ENCODE measurements at regions of chr6 and their contacts with region 1.

Region 1: GRCh38 chr6:38509713-38510112 is 130.0 kb downstream of the BTBD9 start:
- DNase-seq: no peak
- H3K4me3 ChIP-seq: no peak overlapping the region
- H3K27ac ChIP-seq: no peak overlapping the region
- H3K4me1 ChIP-seq: no peaks in the 10 kb centered on the region
- H3K27me3 ChIP-seq: no peaks in the 10 kb centered on the region
- CTCF ChIP-seq: no peak

Region 2: GRCh38 chr6:38452816-38453660 is 56.7 kb before region 1 on chr6:
- intact Hi-C with region 1: no loop called
- DNase-seq: no peak
- H3K4me3 ChIP-seq: no peak overlapping the region
- H3K27ac ChIP-seq: no peak overlapping the region
- H3K4me1 ChIP-seq: no peaks in the 10 kb centered on the region
- H3K27me3 ChIP-seq: no peaks in the 10 kb centered on the region
- CTCF ChIP-seq: no peak

Region 3: GRCh38 chr6:38671885-38672467 is 162.3 kb after region 1 on chr6:
- intact Hi-C with region 1: loop called (anchors 10 kb)
- DNase-seq: peak; percentile 28
- H3K4me3 ChIP-seq: no peak overlapping the region
- H3K27ac ChIP-seq: no peak overlapping the region
- H3K4me1 ChIP-seq: no peaks in the 10 kb centered on the region
- H3K27me3 ChIP-seq: no peaks in the 10 kb centered on the region
- CTCF ChIP-seq: peak; percentile 55

Measured in colonic mucosa (tissue), 4 donors.